ENCODE measurements at regions of chr10 and their contacts with region 1.

Region 1: DNA sequence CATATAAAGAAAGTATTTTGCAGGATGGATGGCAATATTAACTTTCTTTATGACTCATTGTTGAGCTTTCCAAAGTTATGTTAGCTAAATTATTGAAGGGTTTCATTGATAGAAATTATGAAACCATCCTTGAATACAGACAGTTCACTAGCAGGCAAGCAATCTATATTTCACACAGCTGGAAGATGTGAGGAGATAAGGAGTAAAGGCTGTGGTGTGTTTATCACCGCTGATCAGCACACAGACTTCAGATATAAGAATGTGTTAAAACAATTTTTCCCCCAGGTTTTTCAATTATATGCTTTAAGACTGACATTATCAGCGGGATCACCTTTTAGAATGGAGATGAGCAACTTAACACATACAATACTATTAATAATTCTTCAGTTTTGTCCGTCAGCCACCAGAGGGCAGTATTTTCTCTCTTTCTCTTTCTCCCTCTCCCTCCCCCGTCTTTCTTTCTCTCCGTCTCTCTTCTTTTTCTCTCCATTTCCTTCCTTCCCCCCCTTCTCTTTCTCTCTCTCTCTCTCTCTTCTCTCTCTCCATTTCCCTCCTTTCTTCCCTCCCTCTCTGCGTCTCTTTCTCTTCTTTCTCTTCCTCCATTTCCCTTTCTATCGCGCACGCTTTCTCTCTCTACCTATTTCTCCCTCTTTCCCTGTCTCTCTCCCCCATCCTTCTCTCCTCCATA is 62.9 kb upstream of the FAM171A1 start:
- DNase-seq: peak; percentile 54
- H3K4me3 Mint-ChIP-seq: peak overlapping the region; percentile 68
- H3K27ac Mint-ChIP-seq: no peak overlapping the region
- H3K4me1 Mint-ChIP-seq: peaks cover 3% of the 10 kb centered on the region
- H3K27me3 Mint-ChIP-seq: peaks cover 9% of the 10 kb centered on the region

Region 2: GRCh38 chr10:15585303-15585715 is 151.3 kb after region 1 on chr10:
- CTCF ChIA-PET with region 1: no interaction called
- intact Hi-C with region 1: loop called (anchors 10 kb)
- DNase-seq: peak; percentile 64
- H3K4me3 Mint-ChIP-seq: no peak overlapping the region
- H3K27ac Mint-ChIP-seq: no peak overlapping the region
- H3K4me1 Mint-ChIP-seq: no peaks in the 10 kb centered on the region
- H3K27me3 Mint-ChIP-seq: peaks cover 9% of the 10 kb centered on the region

Region 3: DNA sequence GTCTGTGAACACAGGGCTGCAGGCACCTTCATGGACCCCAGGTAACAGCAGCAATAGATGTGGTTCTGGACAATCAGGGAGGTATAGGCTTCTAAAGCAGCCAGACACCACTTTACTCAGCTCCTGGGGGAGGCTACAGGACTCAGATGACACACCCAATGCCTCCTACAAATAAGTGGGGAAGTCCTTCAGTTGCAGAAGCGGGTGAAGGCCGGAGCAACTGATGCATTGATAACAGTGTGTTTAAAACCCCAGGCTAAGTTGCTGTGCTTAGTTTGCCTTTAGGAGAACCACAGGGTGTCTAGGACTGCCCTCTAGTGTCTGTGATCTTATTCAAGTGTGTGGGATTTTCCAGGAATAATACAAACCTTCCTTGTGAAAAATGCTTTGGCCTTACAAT is 291.6 kb after region 1 on chr10:
- CTCF ChIA-PET with region 1: no interaction called
- intact Hi-C with region 1: loop called (anchors 1 kb)
- DNase-seq: peak; percentile 8
- H3K4me3 Mint-ChIP-seq: no peak overlapping the region
- H3K27ac Mint-ChIP-seq: no peak overlapping the region
- H3K4me1 Mint-ChIP-seq: no peaks in the 10 kb centered on the region
- H3K27me3 Mint-ChIP-seq: peaks cover 25% of the 10 kb centered on the region

Region 4: GRCh38 chr10:15744217-15744865 is 310.3 kb after region 1 on chr10:
- CTCF ChIA-PET with region 1: no interaction called
- intact Hi-C with region 1: loop called (anchors 1 kb)
- DNase-seq: peak; percentile 69
- H3K4me3 Mint-ChIP-seq: no peak overlapping the region
- H3K27ac Mint-ChIP-seq: no peak overlapping the region
- H3K4me1 Mint-ChIP-seq: no peaks in the 10 kb centered on the region
- H3K27me3 Mint-ChIP-seq: peaks cover 10% of the 10 kb centered on the region

Region 5: GRCh38 chr10:15824498-15824897 is 390.5 kb after region 1 on chr10:
- CTCF ChIA-PET with region 1: no interaction called
- intact Hi-C with region 1: loop called (anchors 2 kb)
- DNase-seq: no peak
- H3K4me3 Mint-ChIP-seq: no peak overlapping the region
- H3K27ac Mint-ChIP-seq: no peak overlapping the region
- H3K4me1 Mint-ChIP-seq: no peaks in the 10 kb centered on the region
- H3K27me3 Mint-ChIP-seq: no peaks in the 10 kb centered on the region

Measured in activated naive CD4-positive, alpha-beta T cell treated with anti-CD3 and anti-CD28 coated beads for 36 hours (primary cell).